ACHN (cell line): ENCODE measurements at regions of chr7 and their contacts with region 1.

Region 1: DNA sequence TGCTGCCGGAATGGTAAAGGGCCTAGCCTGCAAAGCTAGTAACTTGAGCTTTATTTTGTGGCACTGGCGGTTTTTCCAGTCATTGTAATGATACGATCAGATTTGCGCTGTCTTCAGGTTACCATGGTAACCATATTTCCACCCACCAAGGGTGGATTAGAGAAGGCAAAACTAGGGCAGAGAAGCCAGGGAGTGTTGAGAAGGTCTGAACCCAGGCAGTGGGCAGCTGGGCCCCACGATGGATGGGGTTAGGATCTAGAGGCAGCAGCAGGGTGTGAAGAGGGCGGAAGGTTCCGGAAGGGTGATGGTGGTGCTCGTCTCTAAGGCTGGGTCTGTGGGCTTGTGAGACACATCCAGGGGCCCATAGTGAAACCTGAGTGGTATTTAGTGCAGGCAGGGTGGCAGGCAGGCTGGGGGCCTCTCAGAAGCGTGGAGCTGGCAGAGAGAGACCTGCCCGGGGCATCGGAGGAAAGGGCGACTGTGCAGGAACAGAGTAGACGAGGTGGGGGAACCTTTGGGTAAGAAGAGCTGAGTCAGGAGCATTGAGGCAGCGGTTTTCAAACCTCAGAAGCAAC is 87.9 kb upstream of the GTF2I start:
- DNase-seq: no peak

Region 2: DNA sequence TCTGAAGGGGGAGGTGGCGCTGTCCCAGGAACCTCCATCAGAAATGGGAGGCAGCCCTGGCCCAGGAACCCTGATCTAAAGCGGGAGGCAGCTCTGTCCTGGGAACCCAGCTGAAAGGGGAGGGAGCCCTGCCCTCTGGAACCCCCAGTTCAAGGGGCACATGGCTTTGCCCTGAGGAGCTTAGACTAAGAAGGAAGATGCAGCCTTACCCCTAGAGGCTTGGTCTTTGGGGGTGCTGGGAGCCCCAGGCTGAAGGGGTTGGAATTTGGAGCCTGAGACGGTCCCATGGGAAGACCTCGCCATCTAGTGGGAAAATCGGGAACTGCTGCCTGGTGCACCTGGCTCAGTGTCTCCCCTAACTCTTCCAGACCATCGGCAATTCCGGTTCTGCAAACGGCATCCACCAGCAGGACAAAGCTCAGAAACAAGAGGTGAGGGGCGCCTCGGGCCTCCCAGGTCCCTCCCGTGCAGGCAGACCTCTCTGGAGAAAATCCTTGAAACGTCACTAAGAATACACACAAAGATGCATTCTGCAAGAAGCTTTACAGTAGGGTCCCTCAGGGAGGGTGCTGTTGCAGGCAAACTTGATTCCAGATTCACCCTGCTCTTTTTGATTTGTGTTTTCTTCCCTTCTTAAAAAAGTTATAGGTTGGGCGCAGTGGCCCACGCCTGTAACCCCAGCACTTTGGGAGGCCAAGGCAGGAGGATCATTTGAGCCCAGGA is 168.3 kb before region 1 on chr7:
- in situ Hi-C with region 1: loop called (anchors 25 kb)
- DNase-seq: peak; percentile 77

Region 3: DNA sequence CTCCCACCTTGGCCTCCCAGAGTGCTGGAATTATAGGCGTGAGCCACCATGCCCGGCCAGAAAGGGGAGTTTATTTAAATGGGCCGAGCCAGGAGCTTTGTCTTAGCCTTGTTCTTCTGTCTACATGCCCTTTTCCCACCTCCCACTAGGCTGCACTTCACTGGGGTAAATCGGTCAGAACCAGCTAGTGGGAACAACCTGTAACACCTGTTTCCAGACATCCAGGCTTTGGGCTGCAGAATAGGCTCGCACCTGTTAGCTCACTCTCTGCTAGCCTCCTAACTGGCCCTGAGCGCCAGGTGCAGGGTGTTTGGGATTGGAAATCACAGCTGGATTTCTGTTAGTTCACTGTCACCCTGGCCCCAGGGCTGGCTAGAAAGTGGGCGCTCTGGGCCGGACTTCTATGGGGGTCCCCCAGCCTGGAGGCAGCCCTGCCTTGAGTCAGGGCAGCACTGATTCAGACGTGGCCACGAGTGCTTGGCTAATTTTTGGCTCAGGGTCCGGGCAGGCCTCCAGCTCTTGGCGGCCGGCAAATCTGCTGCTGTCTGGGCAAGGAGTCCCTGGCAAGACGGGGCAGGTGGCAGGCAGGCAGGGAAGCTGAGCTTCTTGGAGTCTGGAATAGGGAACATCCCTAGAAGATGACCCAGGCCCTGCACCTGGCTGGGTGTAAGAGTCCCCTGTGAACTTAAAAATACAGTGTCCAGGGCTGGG is 67.3 kb before region 1 on chr7:
- in situ Hi-C with region 1: no loop called
- DNase-seq: no peak

Region 4: DNA sequence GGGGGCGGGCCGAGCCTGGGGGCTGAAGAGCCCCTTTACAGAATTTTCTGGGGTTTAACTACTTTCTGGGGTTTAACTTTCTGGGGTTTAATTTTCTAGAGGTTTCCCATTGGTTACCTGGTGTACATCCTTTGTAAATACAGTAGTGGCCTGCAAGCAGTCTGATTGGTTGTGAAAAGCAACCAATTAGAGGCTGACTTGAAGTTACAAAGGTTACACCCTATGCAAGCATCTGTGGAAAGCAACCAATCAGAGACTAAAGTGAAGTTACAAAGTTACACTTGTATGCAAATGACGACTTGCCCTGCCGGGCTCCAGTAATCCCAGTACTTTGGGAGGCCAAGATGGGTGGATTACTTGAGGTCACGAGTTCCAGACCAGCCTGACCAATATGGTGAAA is 115.3 kb after region 1 on chr7:
- in situ Hi-C with region 1: no loop called
- DNase-seq: no peak